Endothelial cell of umbilical vein (primary cell): ENCODE measurements at regions of chr12 and their contacts with region 1.

Region 1: GRCh38 chr12:52192173-52192791 is 468 bp upstream of the KRT80 start:
- DNase-seq: peak; percentile 98
- H3K4me3 ChIP-seq: no peak overlapping the region
- H3K27ac ChIP-seq: peak overlapping the region; percentile 87
- H3K4me1 ChIP-seq: peaks cover 57% of the 10 kb centered on the region
- H3K27me3 ChIP-seq: no peaks in the 10 kb centered on the region
- CTCF ChIP-seq: no peak
- POLR2A ChIP-seq: peak; percentile 69

Region 2: GRCh38 chr12:51351913-51352532 is 840.3 kb before region 1 on chr12:
- CTCF ChIA-PET with region 1: no interaction called
- POLR2A ChIA-PET with region 1: no interaction called
- dilution Hi-C with region 1: no loop called
- intact Hi-C with region 1: no loop called
- DNase-seq: peak; percentile 66
- H3K4me3 ChIP-seq: no peak overlapping the region
- H3K27ac ChIP-seq: no peak overlapping the region
- H3K4me1 ChIP-seq: no peaks in the 10 kb centered on the region
- H3K27me3 ChIP-seq: no peaks in the 10 kb centered on the region
- CTCF ChIP-seq: peak; percentile 66 to 80
- POLR2A ChIP-seq: peak; percentile 24

Region 3: GRCh38 chr12:52178984-52179383 is 13.3 kb before region 1 on chr12:
- CTCF ChIA-PET with region 1: interaction called, 34 read pairs
- POLR2A ChIA-PET with region 1: interaction called, 3 read pairs
- dilution Hi-C with region 1: no loop called
- intact Hi-C with region 1: loop called (anchors 1 kb)
- DNase-seq: no peak
- H3K4me3 ChIP-seq: no peak overlapping the region
- H3K27ac ChIP-seq: no peak overlapping the region
- H3K4me1 ChIP-seq: peaks cover 24% of the 10 kb centered on the region
- H3K27me3 ChIP-seq: no peaks in the 10 kb centered on the region
- CTCF ChIP-seq: no peak
- POLR2A ChIP-seq: no peak

Region 4: GRCh38 chr12:52230327-52231291 is 38.3 kb after region 1 on chr12:
- CTCF ChIA-PET with region 1: interaction called, 5 read pairs
- POLR2A ChIA-PET with region 1: no interaction called
- dilution Hi-C with region 1: no loop called
- intact Hi-C with region 1: loop called (anchors 1 kb)
- DNase-seq: peak; percentile 84
- H3K4me3 ChIP-seq: no peak overlapping the region
- H3K27ac ChIP-seq: peak overlapping the region; percentile 84
- H3K4me1 ChIP-seq: peaks cover 44% of the 10 kb centered on the region
- H3K27me3 ChIP-seq: no peaks in the 10 kb centered on the region
- CTCF ChIP-seq: no peak
- POLR2A ChIP-seq: peak; percentile 1

Region 5: DNA sequence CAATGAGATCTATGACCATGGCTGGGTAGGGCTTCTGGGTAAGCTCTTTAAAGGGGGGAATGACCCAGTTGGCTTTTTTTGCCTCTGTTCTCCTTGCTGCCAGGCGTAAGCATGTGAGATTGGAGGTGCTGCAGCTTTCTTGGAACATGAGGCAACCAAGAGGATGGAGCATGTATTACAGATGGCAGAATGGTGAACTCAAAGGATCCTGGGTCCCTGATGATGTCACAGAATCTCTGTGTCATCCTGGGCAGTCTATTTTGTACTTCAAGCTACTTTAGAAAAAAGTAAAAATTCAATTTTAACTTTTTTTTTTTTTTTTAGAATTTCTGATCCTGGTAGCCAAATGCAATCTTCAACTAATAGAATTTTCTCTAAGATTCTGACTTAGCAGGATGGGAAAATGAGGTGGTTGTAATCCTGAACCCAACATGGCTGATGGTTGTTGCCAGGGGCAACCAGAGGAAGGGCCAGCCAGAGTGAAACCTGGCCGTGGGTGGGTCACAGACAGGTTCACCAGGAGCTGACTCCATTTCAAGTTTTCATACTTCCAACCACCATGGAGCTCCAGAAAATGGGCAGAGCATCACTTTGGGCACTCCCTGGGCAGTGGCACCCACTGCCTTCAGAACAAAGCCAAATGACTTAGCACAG is 206.0 kb after region 1 on chr12:
- CTCF ChIA-PET with region 1: no interaction called
- POLR2A ChIA-PET with region 1: no interaction called
- dilution Hi-C with region 1: no loop called
- intact Hi-C with region 1: no loop called
- DNase-seq: no peak
- H3K4me3 ChIP-seq: no peak overlapping the region
- H3K27ac ChIP-seq: no peak overlapping the region
- H3K4me1 ChIP-seq: no peaks in the 10 kb centered on the region
- H3K27me3 ChIP-seq: peaks cover 0 to 2% of the 10 kb centered on the region in 2 experiments
- CTCF ChIP-seq: no peak
- POLR2A ChIP-seq: no peak